Activated B cell treated with CpG ODN at 0.5 μM for 24 hours (primary cell): ENCODE measurements at regions of chr10 and their contacts with region 1.

Region 1: DNA sequence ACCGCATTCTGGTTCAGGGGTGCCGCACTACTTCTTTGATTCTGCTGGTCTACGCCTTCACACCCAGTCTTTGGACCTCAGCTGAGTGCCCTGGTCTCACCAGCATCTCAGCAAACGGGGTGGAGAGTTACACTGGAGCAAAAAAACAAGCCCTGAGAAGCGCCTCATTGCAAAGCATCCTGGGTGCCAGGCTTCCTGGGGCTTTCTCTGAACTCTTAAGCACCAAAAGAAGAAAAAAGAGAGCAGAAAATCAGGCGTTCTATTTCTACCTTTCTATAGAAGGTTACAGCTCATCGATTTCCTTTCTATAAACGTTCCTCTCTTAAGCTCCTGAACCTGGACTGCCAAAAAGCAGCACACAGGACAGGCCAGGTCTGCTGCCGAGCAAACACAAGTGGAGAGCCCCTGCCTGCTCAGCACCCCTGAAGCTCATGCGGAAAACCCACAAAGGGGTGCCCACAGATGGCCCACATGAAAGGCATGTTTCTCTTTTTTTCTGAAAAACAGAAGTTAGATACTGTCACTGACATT is 217.9 kb downstream of the SFMBT2 start:
- DNase-seq: no peak
- ATAC-seq: peak; percentile 74
- H3K4me3 Mint-ChIP-seq: peak overlapping the region; percentile 66
- H3K27ac Mint-ChIP-seq: peak overlapping the region; percentile 87
- H3K4me1 Mint-ChIP-seq: peaks cover 50% of the 10 kb centered on the region
- H3K27me3 Mint-ChIP-seq: no peaks in the 10 kb centered on the region
- CTCF ChIP-seq: no peak

Region 2: GRCh38 chr10:7121154-7121810 is 71.6 kb before region 1 on chr10:
- CTCF ChIA-PET with region 1: no interaction called
- POLR2A ChIA-PET with region 1: no interaction called
- intact Hi-C with region 1: loop called (anchors 2 kb)
- DNase-seq: peak; percentile 43
- ATAC-seq: peak; percentile 85
- H3K4me3 Mint-ChIP-seq: no peak overlapping the region
- H3K27ac Mint-ChIP-seq: no peak overlapping the region
- H3K4me1 Mint-ChIP-seq: peaks cover 6% of the 10 kb centered on the region
- H3K27me3 Mint-ChIP-seq: peaks cover 3% of the 10 kb centered on the region
- CTCF ChIP-seq: peak; percentile 42